Activated CD8-positive, alpha-beta T cell treated with anti-CD3 and anti-CD28 coated beads, Interleukin-2, amount 10 ng/mL, durations not matched to agents 7 days and 5 days (primary cell): ENCODE measurements at regions of chr2 and their contacts with region 1.

Region 1: DNA sequence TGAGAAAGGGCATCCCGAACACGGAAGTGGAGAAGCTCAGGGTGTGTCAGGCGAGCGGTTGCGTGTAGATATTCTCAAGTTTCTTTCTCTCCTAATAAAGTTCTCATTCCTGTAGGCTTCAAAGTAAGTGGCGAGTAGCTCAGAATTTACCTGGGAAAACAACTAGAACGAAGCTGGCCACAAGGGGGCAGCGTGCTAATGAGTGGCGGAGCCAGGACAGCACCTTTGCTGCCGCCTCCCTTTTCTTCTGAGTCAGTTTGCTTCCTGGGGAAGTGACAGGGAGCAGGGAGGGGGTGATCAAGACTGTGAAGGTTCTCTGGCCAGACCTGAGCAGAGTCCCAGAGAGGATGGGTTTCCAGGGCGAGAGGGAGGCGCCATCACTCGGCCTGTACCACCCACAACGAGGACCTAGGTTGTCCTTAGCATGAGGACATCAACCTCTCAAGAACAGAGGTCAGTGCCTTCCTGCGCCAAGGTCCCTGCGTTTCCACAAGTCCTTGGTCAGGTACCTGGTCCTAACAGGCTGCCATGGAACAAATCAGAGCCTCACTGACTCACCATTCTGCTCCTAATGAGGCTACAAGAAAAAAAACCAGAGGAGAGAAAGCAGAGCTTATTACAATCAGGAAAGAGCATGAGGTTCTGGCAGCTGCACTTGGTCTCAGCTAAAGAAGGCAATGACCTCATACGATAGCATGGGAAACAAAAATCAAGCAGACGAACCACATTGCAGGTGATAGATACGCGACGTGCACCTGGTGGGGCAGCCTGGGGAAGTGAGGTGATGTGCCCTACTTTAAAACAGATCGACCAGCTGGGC is 98.6 kb downstream of the PLB1 start:
- DNase-seq: peak; percentile 89
- ATAC-seq: peak; percentile 86
- H3K4me3 Mint-ChIP-seq: no peak overlapping the region
- H3K27ac Mint-ChIP-seq: peak overlapping the region; percentile 60
- H3K4me1 Mint-ChIP-seq: peaks cover 28% of the 10 kb centered on the region
- H3K27me3 Mint-ChIP-seq: no peaks in the 10 kb centered on the region

Region 2: GRCh38 chr2:28454016-28454910 is 140.2 kb before region 1 on chr2:
- CTCF ChIA-PET with region 1: no interaction called
- POLR2A ChIA-PET with region 1: no interaction called
- DNase-seq: no peak
- ATAC-seq: no peak
- H3K4me3 Mint-ChIP-seq: no peak overlapping the region
- H3K27ac Mint-ChIP-seq: no peak overlapping the region
- H3K4me1 Mint-ChIP-seq: peaks cover 33% of the 10 kb centered on the region
- H3K27me3 Mint-ChIP-seq: no peaks in the 10 kb centered on the region

Region 3: DNA sequence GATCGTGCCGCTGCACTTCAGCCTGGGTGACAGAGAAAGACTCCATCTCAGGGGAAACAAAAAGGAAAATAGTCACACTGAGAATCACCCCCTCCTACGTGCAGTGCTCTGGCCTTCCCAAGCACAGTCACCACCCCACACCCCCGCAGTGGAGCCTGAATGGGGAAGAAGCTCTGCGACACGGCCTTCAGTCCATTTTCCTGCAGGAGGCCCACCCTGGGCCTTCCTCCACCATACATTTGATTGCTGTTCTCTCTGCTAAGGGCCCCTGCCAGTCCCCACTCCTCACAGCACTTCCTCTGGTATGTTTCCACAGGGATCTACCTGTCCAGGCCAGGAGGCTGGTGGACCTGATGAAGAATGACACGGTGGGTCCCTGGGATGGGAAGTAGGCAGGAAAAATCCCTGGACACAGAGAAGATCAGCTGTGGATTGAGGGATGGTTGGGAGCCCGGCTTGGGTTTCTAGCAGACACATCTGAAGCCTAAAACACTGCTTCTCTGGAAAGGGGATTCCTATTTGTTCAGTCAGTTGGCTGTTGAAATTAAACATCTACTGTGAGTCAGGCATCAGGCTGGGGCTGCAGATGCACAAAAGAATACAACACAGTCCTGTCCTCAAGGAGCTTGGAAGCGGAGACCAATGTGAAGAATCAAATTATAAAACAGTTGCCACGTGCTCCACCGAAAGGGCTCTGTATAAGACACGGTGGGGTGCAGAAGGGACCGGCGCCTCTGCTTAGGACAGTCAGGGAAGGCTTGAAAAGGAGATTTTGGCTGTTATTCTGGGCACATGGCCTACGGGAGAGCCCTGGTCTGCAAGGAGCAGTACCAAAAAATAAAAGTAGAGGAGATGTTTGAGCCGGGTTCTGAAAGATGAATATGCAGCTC is 16.5 kb before region 1 on chr2:
- CTCF ChIA-PET with region 1: interaction called, 32 read pairs
- POLR2A ChIA-PET with region 1: no interaction called
- DNase-seq: no peak
- ATAC-seq: no peak
- H3K4me3 Mint-ChIP-seq: no peak overlapping the region
- H3K27ac Mint-ChIP-seq: peak overlapping the region; percentile 46
- H3K4me1 Mint-ChIP-seq: peaks cover 12% of the 10 kb centered on the region
- H3K27me3 Mint-ChIP-seq: peaks cover 3% of the 10 kb centered on the region

Region 4: GRCh38 chr2:28610583-28611201 is 16.2 kb after region 1 on chr2:
- CTCF ChIA-PET with region 1: interaction called, 211 read pairs
- POLR2A ChIA-PET with region 1: interaction called, 4 read pairs
- DNase-seq: no peak
- ATAC-seq: no peak
- H3K4me3 Mint-ChIP-seq: no peak overlapping the region
- H3K27ac Mint-ChIP-seq: no peak overlapping the region
- H3K4me1 Mint-ChIP-seq: peaks cover 28% of the 10 kb centered on the region
- H3K27me3 Mint-ChIP-seq: no peaks in the 10 kb centered on the region

Region 5: DNA sequence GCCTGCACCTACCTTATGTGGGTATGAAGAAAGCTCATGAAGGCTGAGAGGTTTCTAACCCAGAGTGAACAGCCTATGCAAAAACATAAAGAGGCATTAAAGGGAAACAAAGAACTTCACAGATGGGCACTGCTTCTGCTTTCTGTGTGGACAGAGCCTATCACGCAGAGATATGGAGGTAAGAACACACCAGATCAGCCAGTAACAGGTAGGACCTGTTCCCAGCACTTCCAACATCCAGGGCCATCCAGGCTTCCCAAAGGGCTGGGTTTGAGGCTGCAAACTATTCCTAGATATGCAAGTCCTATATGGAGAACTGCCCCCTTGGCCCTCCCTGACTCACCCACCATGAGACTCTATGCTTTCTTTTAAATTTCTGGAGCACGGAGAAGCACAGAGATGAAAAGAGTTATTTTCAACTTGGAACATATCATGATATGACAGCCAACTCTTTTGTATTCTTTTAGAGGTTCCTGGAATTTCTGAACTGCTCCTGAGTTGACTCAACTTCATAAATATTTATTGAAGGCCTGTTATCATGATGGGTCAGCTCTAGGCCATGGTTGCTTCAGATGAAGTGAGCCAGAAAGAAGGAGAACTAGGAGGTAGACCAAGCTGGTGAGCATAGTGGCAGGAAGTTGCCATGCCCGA is 79.7 kb after region 1 on chr2:
- CTCF ChIA-PET with region 1: interaction called, 11 read pairs
- POLR2A ChIA-PET with region 1: no interaction called
- DNase-seq: no peak
- ATAC-seq: no peak
- H3K4me3 Mint-ChIP-seq: no peak overlapping the region
- H3K27ac Mint-ChIP-seq: no peak overlapping the region
- H3K4me1 Mint-ChIP-seq: no peaks in the 10 kb centered on the region
- H3K27me3 Mint-ChIP-seq: no peaks in the 10 kb centered on the region

Region 6: GRCh38 chr2:28697602-28698149 is 103.2 kb after region 1 on chr2:
- CTCF ChIA-PET with region 1: interaction called, 11 read pairs
- POLR2A ChIA-PET with region 1: no interaction called
- DNase-seq: no peak
- ATAC-seq: no peak
- H3K4me3 Mint-ChIP-seq: no peak overlapping the region
- H3K27ac Mint-ChIP-seq: no peak overlapping the region
- H3K4me1 Mint-ChIP-seq: peaks cover 6% of the 10 kb centered on the region
- H3K27me3 Mint-ChIP-seq: no peaks in the 10 kb centered on the region

Region 7: GRCh38 chr2:28761420-28761819 is 166.9 kb after region 1 on chr2:
- CTCF ChIA-PET with region 1: interaction called, 224 read pairs
- POLR2A ChIA-PET with region 1: no interaction called
- DNase-seq: no peak
- ATAC-seq: no peak
- H3K4me3 Mint-ChIP-seq: no peak overlapping the region
- H3K27ac Mint-ChIP-seq: no peak overlapping the region
- H3K4me1 Mint-ChIP-seq: peaks cover 28% of the 10 kb centered on the region
- H3K27me3 Mint-ChIP-seq: no peaks in the 10 kb centered on the region

Region 8: DNA sequence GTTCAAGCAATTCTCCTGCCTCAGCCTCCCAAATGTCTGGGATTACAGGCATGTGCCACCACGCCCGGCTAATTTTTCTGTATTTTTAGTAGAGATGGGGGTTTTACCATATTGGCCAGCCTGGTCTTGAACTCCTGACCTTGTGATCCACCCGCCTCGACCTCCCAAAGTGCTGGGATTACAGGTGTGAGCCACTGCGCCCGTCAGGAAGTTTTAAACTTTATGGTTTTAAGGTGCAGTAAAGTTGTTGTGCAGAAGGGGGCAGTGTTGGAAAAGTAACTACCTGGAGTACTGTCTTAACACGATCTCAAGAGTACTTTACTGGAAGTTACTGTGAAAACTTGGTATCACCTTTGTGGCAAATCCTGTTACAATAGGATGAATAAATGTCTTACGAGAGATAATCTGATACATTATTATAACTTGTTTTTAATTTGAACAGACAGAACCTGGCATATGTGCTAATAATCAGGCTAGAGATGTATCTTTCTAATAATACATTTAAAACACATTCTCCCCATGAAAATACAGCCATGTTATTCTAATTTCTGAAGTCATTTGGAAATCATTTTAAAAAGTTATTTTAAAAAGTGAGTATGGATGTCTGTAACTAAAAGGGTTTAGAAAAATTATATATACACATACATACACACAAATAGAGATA is 226.9 kb after region 1 on chr2:
- CTCF ChIA-PET with region 1: interaction called, 10 read pairs
- POLR2A ChIA-PET with region 1: no interaction called
- DNase-seq: peak; percentile 80
- ATAC-seq: peak; percentile 86
- H3K4me3 Mint-ChIP-seq: no peak overlapping the region
- H3K27ac Mint-ChIP-seq: no peak overlapping the region
- H3K4me1 Mint-ChIP-seq: peaks cover 3% of the 10 kb centered on the region
- H3K27me3 Mint-ChIP-seq: peaks cover 2% of the 10 kb centered on the region